Activated naive CD4-positive, alpha-beta T cell treated with anti-CD3 and anti-CD28 coated beads for 36 hours (primary cell): ENCODE measurements at regions of chr20 and their contacts with region 1.

Region 1: GRCh38 chr20:12012241-12013222 is 94.8 kb downstream of the BTBD3 start:
- DNase-seq: peak; percentile 39
- H3K4me3 Mint-ChIP-seq: no peak overlapping the region
- H3K27ac Mint-ChIP-seq: no peak overlapping the region
- H3K4me1 Mint-ChIP-seq: peaks cover 2% of the 10 kb centered on the region
- H3K27me3 Mint-ChIP-seq: peaks cover 2% of the 10 kb centered on the region

Region 2: DNA sequence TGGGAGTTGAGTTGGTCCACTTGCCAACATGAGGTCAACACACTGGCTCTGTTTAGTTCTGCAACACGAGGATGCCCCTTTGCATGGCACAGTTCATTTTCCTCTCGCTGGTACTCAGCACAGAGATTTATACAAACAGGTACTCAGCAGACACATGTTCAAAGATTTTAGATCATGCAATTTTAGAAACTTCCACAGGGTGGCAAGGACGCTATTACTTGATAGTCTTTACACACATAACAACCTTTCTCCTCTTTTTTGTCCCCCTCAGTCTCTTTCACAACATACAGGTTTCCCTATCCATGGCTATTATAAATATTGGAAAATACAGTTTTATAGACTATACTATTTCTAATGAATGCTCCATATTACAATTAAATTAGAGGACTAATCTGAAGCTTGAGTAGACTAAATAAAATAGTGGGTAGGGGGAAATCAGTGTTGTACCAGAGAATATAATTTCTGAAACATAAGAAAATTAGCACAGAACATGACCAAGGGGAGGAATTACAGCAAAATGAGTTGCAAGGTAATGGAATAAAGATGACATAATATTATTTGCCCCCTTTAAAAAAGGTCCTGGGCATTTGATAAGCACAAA is 426.7 kb before region 1 on chr20:
- CTCF ChIA-PET with region 1: no interaction called
- intact Hi-C with region 1: no loop called
- DNase-seq: no peak
- H3K4me3 Mint-ChIP-seq: no peak overlapping the region
- H3K27ac Mint-ChIP-seq: no peak overlapping the region
- H3K4me1 Mint-ChIP-seq: no peaks in the 10 kb centered on the region
- H3K27me3 Mint-ChIP-seq: no peaks in the 10 kb centered on the region

Region 3: GRCh38 chr20:11676630-11677284 is 335.8 kb before region 1 on chr20:
- CTCF ChIA-PET with region 1: no interaction called
- intact Hi-C with region 1: loop called (anchors 5 kb)
- DNase-seq: peak; percentile 19
- H3K4me3 Mint-ChIP-seq: no peak overlapping the region
- H3K27ac Mint-ChIP-seq: no peak overlapping the region
- H3K4me1 Mint-ChIP-seq: no peaks in the 10 kb centered on the region
- H3K27me3 Mint-ChIP-seq: no peaks in the 10 kb centered on the region